ENCODE measurements at regions of chr1 and their contacts with region 1.

Region 1: DNA sequence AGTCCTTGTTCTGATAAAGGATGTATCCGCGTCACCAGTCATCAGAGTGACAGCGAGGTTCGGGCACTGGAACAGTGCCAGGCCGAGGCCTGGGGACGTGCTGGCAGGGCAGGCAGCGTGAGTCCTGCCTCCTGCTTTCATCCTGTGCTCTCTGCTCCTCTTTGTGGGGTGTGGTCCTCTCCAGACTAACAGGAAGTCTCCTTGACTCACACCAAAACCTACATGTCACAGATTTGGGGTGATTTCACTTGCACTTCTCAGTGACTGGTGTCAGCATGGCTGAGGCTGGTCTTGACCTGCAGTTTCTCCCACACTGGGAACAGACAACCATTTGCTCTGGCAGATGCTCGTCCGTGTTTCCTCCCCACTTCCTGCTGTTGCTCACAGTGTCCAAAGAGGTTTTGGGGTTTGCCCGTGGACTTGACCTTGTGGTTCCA is 8.8 kb upstream of the NLRP3 start:
- DNase-seq: peak; percentile 73 to 90 (median 78)
- H3K4me3 ChIP-seq: peak overlapping the region; percentile 54 to 57
- H3K4me3 Mint-ChIP-seq: peak overlapping the region; percentile 82 to 95 (median 88)
- H3K27ac ChIP-seq: peak overlapping the region; percentile 65
- H3K27ac Mint-ChIP-seq: peak overlapping the region; percentile 83 to 98 (median 95)
- H3K4me1 ChIP-seq: peaks cover 45% of the 10 kb centered on the region
- H3K4me1 Mint-ChIP-seq: peaks cover 29 to 46% (median 39%) of the 10 kb centered on the region in 4 donors
- H3K27me3 ChIP-seq: no peaks in the 10 kb centered on the region
- H3K27me3 Mint-ChIP-seq: no peaks in the 10 kb centered on the region

Region 2: GRCh38 chr1:247421074-247421473 is 13.9 kb after region 1 on chr1:
- CTCF ChIA-PET with region 1: interaction called, 3 read pairs
- POLR2A ChIA-PET with region 1: interaction called, 9 read pairs
- intact Hi-C with region 1: loop called (anchors 1 kb)
- DNase-seq: no peak
- H3K4me3 ChIP-seq: no peak overlapping the region
- H3K4me3 Mint-ChIP-seq: peak overlapping the region; percentile 37 to 71 (median 65)
- H3K27ac ChIP-seq: no peak overlapping the region
- H3K27ac Mint-ChIP-seq: peak overlapping the region in 5 of 7 donors; percentile 0 to 77 (median 18)
- H3K4me1 ChIP-seq: peaks cover 51% of the 10 kb centered on the region
- H3K4me1 Mint-ChIP-seq: peaks cover 47 to 81% (median 63%) of the 10 kb centered on the region in 4 donors
- H3K27me3 ChIP-seq: no peaks in the 10 kb centered on the region
- H3K27me3 Mint-ChIP-seq: no peaks in the 10 kb centered on the region

Measured in CD4-positive, alpha-beta memory T cell (primary cell).